ENCODE measurements at regions of chr3 and their contacts with region 1.

Region 1: GRCh38 chr3:98188545-98188944 is 22.0 kb downstream of the OR5H15 start:
- DNase-seq: peak in 3 of 9 donors; percentile 1 to 10 (median 3)
- ATAC-seq: peak; percentile 66
- H3K4me3 ChIP-seq: no peak overlapping the region
- H3K4me3 Mint-ChIP-seq: no peak overlapping the region
- H3K27ac ChIP-seq: no peak overlapping the region
- H3K27ac Mint-ChIP-seq: no peak overlapping the region
- H3K4me1 ChIP-seq: no peaks in the 10 kb centered on the region
- H3K4me1 Mint-ChIP-seq: peaks cover 0 to 5% (median 1%) of the 10 kb centered on the region in 7 donors
- H3K27me3 ChIP-seq: no peaks in the 10 kb centered on the region
- H3K27me3 Mint-ChIP-seq: peaks cover 8 to 19% (median 12%) of the 10 kb centered on the region in 5 donors

Region 2: GRCh38 chr3:98140531-98140930 is 48.0 kb before region 1 on chr3:
- CTCF ChIA-PET with region 1: no interaction called
- POLR2A ChIA-PET with region 1: no interaction called
- intact Hi-C with region 1: loop called in 1 of 2 experiments (anchors 1 kb)
- DNase-seq: no peak
- ATAC-seq: no peak
- H3K4me3 ChIP-seq: no peak overlapping the region
- H3K4me3 Mint-ChIP-seq: no peak overlapping the region
- H3K27ac ChIP-seq: no peak overlapping the region
- H3K27ac Mint-ChIP-seq: no peak overlapping the region
- H3K4me1 ChIP-seq: no peaks in the 10 kb centered on the region
- H3K4me1 Mint-ChIP-seq: peaks cover 0 to 2% (median 0%) of the 10 kb centered on the region in 7 donors
- H3K27me3 ChIP-seq: no peaks in the 10 kb centered on the region
- H3K27me3 Mint-ChIP-seq: peaks cover 0 to 12% (median 7%) of the 10 kb centered on the region in 5 donors

Region 3: DNA sequence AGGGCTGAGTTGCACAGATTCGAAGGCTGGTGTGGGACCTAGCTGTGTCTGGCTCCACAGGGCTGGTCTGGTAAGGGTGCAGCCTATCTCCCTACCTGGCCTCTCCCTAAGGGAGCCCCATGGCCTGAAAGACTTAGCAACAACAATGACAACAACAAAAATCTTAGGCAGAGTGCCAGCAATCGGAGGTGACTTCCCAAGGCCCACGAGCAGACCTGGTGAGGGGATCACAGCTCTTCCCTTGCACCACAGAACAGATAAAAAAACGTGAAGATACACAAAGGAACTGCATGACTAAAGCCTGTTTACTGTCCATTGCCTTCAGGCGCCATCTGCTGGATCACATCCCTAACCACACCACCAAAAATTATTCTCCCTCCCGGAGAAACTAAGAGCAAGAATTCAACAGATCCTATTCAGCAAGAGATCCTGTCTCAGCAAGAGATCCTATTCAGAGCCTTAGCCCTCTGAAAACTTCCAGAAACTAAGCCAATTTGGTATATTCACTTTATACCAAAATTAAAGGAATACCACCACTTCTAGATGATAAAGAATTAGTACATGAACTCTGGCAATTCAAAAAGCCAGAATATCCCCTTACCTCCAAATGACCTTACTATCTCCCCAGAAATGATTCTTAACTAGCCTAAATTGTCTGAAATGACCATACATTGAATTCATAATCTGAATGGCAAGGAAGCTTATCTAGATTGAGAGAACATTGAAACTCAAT is 141.0 kb after region 1 on chr3:
- CTCF ChIA-PET with region 1: no interaction called
- POLR2A ChIA-PET with region 1: no interaction called
- intact Hi-C with region 1: loop called (anchors 1 kb)
- DNase-seq: peak in 8 of 9 donors; percentile 9 to 48 (median 34)
- ATAC-seq: peak; percentile 83
- H3K4me3 ChIP-seq: no peak overlapping the region
- H3K4me3 Mint-ChIP-seq: no peak overlapping the region
- H3K27ac ChIP-seq: no peak overlapping the region
- H3K27ac Mint-ChIP-seq: peak overlapping the region in 1 of 9 donors; percentile 8
- H3K4me1 ChIP-seq: no peaks in the 10 kb centered on the region
- H3K4me1 Mint-ChIP-seq: peaks cover 0 to 25% (median 0%) of the 10 kb centered on the region in 7 donors
- H3K27me3 ChIP-seq: no peaks in the 10 kb centered on the region
- H3K27me3 Mint-ChIP-seq: peaks cover 16 to 66% (median 32%) of the 10 kb centered on the region in 5 donors

Measured in naive thymus-derived CD4-positive, alpha-beta T cell (primary cell).